AG04450 (cell line): ENCODE measurements at regions of chr4 and their contacts with region 1.

Region 1: GRCh38 chr4:82360298-82361177 is 13.3 kb downstream of the HNRNPD start:
- DNase-seq: no peak
- H3K4me3 ChIP-seq: no peak overlapping the region
- H3K27ac ChIP-seq: no peak overlapping the region
- H3K27me3 ChIP-seq: no peaks in the 10 kb centered on the region
- CTCF ChIP-seq: peak; percentile 73

Region 2: DNA sequence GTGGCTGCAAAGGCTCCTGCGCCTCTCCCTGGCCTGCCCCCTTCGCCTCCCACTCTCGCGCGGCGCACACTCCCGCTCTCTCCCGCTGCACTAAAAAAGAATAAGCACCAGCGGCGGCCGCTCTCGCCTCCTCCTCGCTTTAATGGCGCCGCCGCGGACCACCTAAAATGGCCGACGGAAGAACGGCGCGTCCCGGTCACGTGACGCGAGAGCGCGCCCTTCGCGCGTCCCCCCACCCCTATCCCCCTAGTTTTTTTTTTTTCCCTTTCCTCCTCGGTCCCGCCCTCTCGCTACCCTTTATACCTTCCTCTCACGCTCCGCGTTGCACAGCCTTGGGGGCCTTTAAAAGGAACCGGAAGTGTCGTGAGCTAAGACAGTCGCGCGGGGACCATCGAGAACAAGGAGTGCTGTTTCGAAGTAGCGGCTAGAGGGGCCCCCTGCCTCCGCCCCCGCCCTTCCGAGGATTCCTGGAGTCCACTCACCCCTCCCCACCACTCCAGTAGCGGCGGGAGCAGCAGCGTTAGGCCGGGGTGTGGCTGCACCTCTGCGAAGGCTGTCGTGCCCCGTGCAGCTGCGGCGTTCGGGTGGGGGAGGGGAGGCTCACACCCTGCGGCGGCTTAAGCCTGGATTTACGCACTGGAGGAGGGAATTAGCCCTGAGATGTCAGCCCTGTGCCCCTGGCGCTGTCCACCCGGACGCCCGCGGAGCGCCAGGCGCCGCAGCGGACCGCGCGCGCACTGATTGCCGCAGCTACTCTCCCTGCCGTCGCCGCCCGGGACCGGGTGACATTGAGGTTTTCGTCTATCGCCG is 13.5 kb after region 1 on chr4 and contains the start of gene HNRNPD:
- CTCF ChIA-PET with region 1: interaction called, 39 read pairs
- POLR2A ChIA-PET with region 1: interaction called, 4 read pairs
- DNase-seq: peak; percentile 99
- H3K4me3 ChIP-seq: peak within 1 kb of the TSS; percentile 98
- H3K27ac ChIP-seq: peak within 1 kb of the TSS; percentile 97
- H3K27me3 ChIP-seq: no peaks in the 10 kb centered on the region
- CTCF ChIP-seq: no peak
- polyA plus RNA-seq, gene HNRNPD: 73.4 and 93.8 TPM in 2 replicates

Region 3: GRCh38 chr4:83043801-83044407 is 683.4 kb after region 1 on chr4:
- CTCF ChIA-PET with region 1: no interaction called
- POLR2A ChIA-PET with region 1: no interaction called
- DNase-seq: no peak
- H3K4me3 ChIP-seq: no peak overlapping the region
- H3K27ac ChIP-seq: no peak overlapping the region
- H3K27me3 ChIP-seq: no peaks in the 10 kb centered on the region
- CTCF ChIP-seq: no peak